Common myeloid progenitor, CD34-positive (primary cell): ENCODE measurements at regions of chr2 and their contacts with region 1.

Region 1: DNA sequence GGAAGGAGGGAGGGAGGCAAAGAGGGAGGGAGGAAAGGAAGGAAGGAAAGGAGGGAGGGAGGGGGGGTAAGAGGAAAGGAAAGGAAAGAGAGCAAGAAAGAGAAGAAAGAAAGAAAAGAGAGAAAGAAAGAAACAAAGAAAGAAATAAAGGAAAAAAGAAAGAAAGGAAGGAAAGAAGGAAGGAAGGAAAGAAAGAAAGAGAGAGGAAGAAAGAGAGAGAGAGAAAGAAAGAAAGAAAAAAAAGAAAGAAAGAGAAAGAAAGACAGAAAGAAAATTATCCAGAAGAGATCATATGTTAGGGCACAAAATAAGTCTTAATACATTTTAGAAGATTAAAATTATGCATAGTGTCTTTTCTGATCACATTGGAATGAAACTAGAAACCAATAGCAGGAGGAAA is 24.3 kb upstream of the TFCP2L1 start:
- DNase-seq: no peak
- H3K4me3 ChIP-seq: peak overlapping the region in 1 of 7 experiments; percentile 33
- H3K27ac ChIP-seq: peak overlapping the region; percentile 80 to 88
- H3K4me1 ChIP-seq: peaks cover 0 to 9% (median 3%) of the 10 kb centered on the region in 4 experiments
- H3K27me3 ChIP-seq: no peaks in the 10 kb centered on the region

Region 2: DNA sequence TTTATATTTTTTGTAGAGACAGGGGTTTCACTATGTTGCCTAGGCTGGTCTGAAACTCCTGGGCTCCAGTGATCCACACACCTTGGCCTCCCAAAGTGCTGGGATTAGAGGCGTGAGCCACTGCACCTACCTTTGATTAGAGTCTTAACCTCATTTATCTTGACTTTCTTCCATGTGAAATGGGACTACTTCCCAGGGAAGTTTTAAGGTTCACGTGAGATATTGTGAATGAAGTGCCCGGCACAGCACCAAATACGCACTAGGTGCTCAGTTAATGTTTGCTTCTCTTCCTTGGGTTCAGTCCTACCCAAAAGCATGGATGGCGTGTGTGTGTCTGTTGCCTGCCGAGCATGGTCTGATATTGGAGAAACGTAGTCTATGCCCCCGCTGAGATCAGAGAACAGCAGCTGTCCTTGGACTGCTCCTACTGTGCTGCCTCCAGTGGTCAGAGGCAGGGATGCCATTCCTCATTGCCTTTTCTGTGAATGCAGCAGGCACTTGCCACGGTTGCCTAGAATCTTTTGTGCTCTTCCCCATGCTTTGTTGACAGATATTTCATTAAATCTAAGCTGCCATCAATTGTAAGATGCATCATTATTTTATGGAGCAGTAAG is 12.0 kb before region 1 on chr2:
- CTCF ChIA-PET with region 1: interaction called, 12 read pairs
- POLR2A ChIA-PET with region 1: no interaction called
- DNase-seq: peak; percentile 16 to 57 (median 53)
- H3K4me3 ChIP-seq: no peak overlapping the region
- H3K27ac ChIP-seq: no peak overlapping the region
- H3K4me1 ChIP-seq: no peaks in the 10 kb centered on the region
- H3K27me3 ChIP-seq: no peaks in the 10 kb centered on the region